Activated CD4-positive, alpha-beta memory T cell treated with anti-CD3 and anti-CD28 coated beads for 36 hours (primary cell): ENCODE measurements at regions of chr1 and their contacts with region 1.

Region 1: GRCh38 chr1:192580351-192580962 is 4.9 kb downstream of the RGS1 start:
- DNase-seq: no peak
- H3K4me3 Mint-ChIP-seq: peak overlapping the region; percentile 24
- H3K27ac Mint-ChIP-seq: peak overlapping the region; percentile 26
- H3K4me1 Mint-ChIP-seq: peaks cover 46% of the 10 kb centered on the region
- H3K27me3 Mint-ChIP-seq: no peaks in the 10 kb centered on the region

Region 2: DNA sequence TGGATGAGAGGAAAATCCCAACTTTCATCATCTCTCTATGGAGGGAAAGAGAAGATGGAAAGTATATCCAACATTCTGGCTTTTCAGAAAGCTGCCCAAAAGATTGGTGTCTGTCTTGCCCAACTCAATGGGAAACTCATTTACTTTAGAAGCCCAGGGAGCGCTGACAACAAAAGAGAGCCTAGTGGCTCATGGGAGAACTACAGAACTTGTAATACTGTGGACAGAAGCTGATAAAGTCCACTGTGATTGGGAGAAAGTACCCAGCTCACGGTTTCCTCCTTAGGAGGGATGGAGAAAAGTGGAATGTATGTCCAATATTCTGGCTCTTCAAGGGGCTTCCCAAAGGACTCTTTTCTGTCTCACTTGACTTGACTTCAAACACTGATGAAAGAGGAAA is 197.7 kb before region 1 on chr1:
- CTCF ChIA-PET with region 1: no interaction called
- POLR2A ChIA-PET with region 1: no interaction called
- intact Hi-C with region 1: no loop called
- DNase-seq: no peak
- H3K4me3 Mint-ChIP-seq: no peak overlapping the region
- H3K27ac Mint-ChIP-seq: no peak overlapping the region
- H3K4me1 Mint-ChIP-seq: no peaks in the 10 kb centered on the region
- H3K27me3 Mint-ChIP-seq: no peaks in the 10 kb centered on the region

Region 3: GRCh38 chr1:192477630-192478029 is 102.8 kb before region 1 on chr1:
- CTCF ChIA-PET with region 1: interaction called, 17 read pairs
- POLR2A ChIA-PET with region 1: interaction called, 3 read pairs
- intact Hi-C with region 1: loop called (anchors 1 kb)
- DNase-seq: no peak
- H3K4me3 Mint-ChIP-seq: no peak overlapping the region
- H3K27ac Mint-ChIP-seq: no peak overlapping the region
- H3K4me1 Mint-ChIP-seq: no peaks in the 10 kb centered on the region
- H3K27me3 Mint-ChIP-seq: no peaks in the 10 kb centered on the region

Region 4: DNA sequence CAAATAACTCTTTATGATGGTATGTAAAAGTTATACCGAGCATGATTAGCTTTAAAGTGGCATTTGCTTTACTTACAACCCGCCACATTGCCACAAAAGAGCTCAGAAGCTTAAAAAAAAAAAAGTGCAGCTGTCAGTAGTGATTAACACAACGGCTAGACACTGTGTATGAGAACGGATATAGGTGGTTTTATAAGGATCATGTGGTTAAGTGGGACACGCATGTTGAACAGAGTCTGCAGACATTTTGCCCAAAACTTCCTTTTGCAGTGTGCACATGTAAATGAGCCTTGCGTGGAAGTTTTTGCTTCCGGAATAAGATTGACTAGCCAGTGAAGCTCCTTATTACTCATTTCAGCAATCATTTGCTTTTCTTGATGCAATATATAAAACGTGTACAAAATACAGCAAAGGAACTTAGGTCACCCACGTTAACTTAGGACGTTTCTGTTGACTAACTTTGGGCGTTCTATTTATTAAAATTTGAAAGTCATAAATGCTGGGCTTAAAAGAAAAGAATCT is 63.6 kb before region 1 on chr1:
- CTCF ChIA-PET with region 1: no interaction called
- POLR2A ChIA-PET with region 1: no interaction called
- intact Hi-C with region 1: loop called (anchors 1 kb)
- DNase-seq: peak; percentile 71
- H3K4me3 Mint-ChIP-seq: peak overlapping the region; percentile 53
- H3K27ac Mint-ChIP-seq: peak overlapping the region; percentile 82
- H3K4me1 Mint-ChIP-seq: peaks cover 56% of the 10 kb centered on the region
- H3K27me3 Mint-ChIP-seq: no peaks in the 10 kb centered on the region

Region 5: DNA sequence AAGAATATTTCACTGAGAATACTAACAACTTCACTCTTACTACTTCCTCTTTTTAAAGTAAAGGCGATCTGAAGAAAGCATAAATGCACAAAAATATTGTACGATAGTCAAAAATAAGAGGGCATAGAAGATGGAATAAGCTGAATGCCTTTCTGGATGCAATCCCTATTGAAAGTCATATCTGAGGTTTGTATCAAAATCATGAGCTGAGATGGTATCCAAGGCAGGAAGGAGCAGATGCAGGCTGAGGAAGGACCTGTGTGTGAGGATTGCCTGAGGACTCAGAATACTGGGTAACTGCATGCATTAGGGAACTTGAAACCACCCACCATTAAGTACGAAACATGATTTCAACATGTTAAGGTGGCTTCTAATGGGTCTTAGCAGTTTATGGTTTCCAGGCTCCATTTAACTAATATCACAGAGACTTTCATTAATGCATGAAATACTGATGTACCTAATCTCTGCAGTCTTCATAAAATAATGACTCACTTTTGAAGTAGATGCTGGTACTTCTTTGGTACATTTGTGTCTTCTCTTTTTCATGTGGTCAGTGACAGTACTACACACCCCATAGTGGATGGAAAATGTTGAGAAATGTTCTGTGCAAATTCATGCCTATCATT is 34.4 kb before region 1 on chr1:
- CTCF ChIA-PET with region 1: interaction called, 7 read pairs
- POLR2A ChIA-PET with region 1: interaction called, 21 read pairs
- intact Hi-C with region 1: loop called (anchors 1 kb)
- DNase-seq: no peak
- H3K4me3 Mint-ChIP-seq: peak overlapping the region; percentile 30
- H3K27ac Mint-ChIP-seq: peak overlapping the region; percentile 46
- H3K4me1 Mint-ChIP-seq: peaks cover 60% of the 10 kb centered on the region
- H3K27me3 Mint-ChIP-seq: no peaks in the 10 kb centered on the region

Region 6: GRCh38 chr1:192559115-192560006 is 21.1 kb before region 1 on chr1:
- CTCF ChIA-PET with region 1: interaction called, 3 read pairs
- POLR2A ChIA-PET with region 1: no interaction called
- intact Hi-C with region 1: loop called (anchors 1 kb)
- DNase-seq: peak; percentile 36
- H3K4me3 Mint-ChIP-seq: no peak overlapping the region
- H3K27ac Mint-ChIP-seq: peak overlapping the region; percentile 33
- H3K4me1 Mint-ChIP-seq: peaks cover 44% of the 10 kb centered on the region
- H3K27me3 Mint-ChIP-seq: no peaks in the 10 kb centered on the region

Region 7: DNA sequence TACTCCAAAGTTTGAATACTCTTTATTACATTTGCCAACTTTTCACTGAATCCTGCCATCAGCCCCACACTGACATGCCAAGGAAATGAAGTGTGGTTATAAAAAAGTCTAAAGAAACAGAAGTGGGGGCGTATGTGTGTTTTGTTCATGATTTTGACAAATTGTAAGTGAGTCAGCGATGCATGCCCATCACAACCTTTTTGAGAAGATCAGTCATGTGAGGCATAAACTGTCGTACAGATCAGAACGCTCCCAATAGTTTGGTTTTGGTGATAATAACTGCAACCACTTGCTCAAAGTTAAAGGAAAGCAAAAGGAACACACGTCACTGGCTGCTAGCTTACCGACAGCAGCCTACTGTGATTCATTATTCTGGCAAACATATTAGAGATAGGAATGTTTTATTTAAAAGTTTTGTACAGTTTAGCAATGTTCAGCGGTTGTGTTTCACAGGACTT is 324.0 kb after region 1 on chr1:
- CTCF ChIA-PET with region 1: no interaction called
- POLR2A ChIA-PET with region 1: no interaction called
- intact Hi-C with region 1: no loop called
- DNase-seq: peak; percentile 20
- H3K4me3 Mint-ChIP-seq: no peak overlapping the region
- H3K27ac Mint-ChIP-seq: no peak overlapping the region
- H3K4me1 Mint-ChIP-seq: no peaks in the 10 kb centered on the region
- H3K27me3 Mint-ChIP-seq: no peaks in the 10 kb centered on the region

Region 8: GRCh38 chr1:193059268-193060225 is 479.1 kb after region 1 on chr1 and contains the starts of genes RO60 and UCHL5:
- CTCF ChIA-PET with region 1: no interaction called
- POLR2A ChIA-PET with region 1: no interaction called
- intact Hi-C with region 1: loop called (anchors 2 kb)
- DNase-seq: peak; percentile 98
- H3K4me3 Mint-ChIP-seq: peak within 1 kb of the TSS; percentile 92
- H3K27ac Mint-ChIP-seq: peak within 1 kb of the TSS; percentile 98
- H3K4me1 Mint-ChIP-seq: peaks cover 57% of the 10 kb centered on the region
- H3K27me3 Mint-ChIP-seq: peaks cover 1% of the 10 kb centered on the region
- total RNA-seq, gene RO60: 56.5 to 65.8 TPM
- total RNA-seq, gene UCHL5: 72.1 to 77.5 TPM